CD4-positive, alpha-beta T cell (primary cell): ENCODE measurements at regions of chr1 and their contacts with region 1.

Region 1: DNA sequence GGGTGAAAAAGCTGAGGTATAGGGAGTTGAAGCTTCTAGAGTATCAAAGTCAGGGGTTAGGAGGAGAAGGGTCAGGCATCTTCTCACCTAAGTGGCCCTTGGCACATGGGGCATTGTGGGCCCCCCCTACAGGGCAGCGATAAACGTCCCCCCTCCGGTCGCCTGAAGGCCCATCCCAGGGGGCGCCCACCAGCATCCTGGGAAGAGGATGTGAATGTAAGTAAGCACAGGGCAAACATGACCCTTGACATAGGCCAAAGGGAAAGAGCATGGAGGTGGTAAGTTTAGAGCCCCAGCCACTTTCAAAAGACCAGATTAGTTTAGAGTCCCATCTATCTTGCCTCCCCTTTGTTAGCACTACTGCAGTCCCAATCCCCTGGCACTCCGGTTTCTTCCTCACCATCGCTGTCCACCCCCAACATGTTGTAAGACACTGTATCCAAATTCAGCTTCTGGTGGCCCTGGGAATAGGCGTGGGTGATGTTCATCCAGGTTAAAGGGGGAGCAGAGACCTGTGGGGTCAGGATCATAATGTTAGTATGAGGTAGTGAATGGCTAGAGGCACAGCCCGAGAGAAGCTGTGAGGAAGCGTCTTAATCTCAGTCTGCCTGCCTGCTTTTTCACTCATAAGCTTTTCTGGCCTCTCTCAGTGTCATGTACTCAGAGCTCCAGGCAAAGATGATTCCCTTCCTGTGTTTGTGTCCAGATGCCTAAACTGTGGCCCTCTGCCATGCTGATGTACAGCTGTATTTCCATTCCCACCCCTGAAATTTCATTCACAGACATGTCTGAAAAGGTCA is 2.7 kb downstream of the ITGA10 start:
- DNase-seq: no peak
- ATAC-seq: no peak
- H3K4me3 ChIP-seq: no peak overlapping the region
- H3K4me3 Mint-ChIP-seq: no peak overlapping the region
- H3K27ac ChIP-seq: no peak overlapping the region
- H3K27ac Mint-ChIP-seq: no peak overlapping the region
- H3K4me1 ChIP-seq: peaks cover 3% of the 10 kb centered on the region
- H3K4me1 Mint-ChIP-seq: peaks cover 6% of the 10 kb centered on the region
- H3K27me3 ChIP-seq: no peaks in the 10 kb centered on the region
- H3K27me3 Mint-ChIP-seq: no peaks in the 10 kb centered on the region
- CTCF ChIP-seq: no peak

Region 2: GRCh38 chr1:145804235-145805045 is 102.7 kb before region 1 on chr1:
- CTCF ChIA-PET with region 1: no interaction called
- POLR2A ChIA-PET with region 1: no interaction called
- intact Hi-C with region 1: no loop called
- DNase-seq: no peak
- ATAC-seq: no peak
- H3K4me3 ChIP-seq: no peak overlapping the region
- H3K4me3 Mint-ChIP-seq: no peak overlapping the region
- H3K27ac ChIP-seq: no peak overlapping the region
- H3K27ac Mint-ChIP-seq: no peak overlapping the region
- H3K4me1 ChIP-seq: no peaks in the 10 kb centered on the region
- H3K4me1 Mint-ChIP-seq: peaks cover 64% of the 10 kb centered on the region
- H3K27me3 ChIP-seq: no peaks in the 10 kb centered on the region
- H3K27me3 Mint-ChIP-seq: no peaks in the 10 kb centered on the region
- CTCF ChIP-seq: no peak

Region 3: GRCh38 chr1:145891587-145892485 is 15.3 kb before region 1 on chr1:
- CTCF ChIA-PET with region 1: interaction called, 4 read pairs
- POLR2A ChIA-PET with region 1: no interaction called
- intact Hi-C with region 1: loop called in 1 of 2 experiments (anchors 1 kb)
- DNase-seq: peak; percentile 18 to 70 (median 40)
- ATAC-seq: peak; percentile 70
- H3K4me3 ChIP-seq: no peak overlapping the region
- H3K4me3 Mint-ChIP-seq: no peak overlapping the region
- H3K27ac ChIP-seq: no peak overlapping the region
- H3K27ac Mint-ChIP-seq: no peak overlapping the region
- H3K4me1 ChIP-seq: no peaks in the 10 kb centered on the region
- H3K4me1 Mint-ChIP-seq: no peaks in the 10 kb centered on the region
- H3K27me3 ChIP-seq: no peaks in the 10 kb centered on the region
- H3K27me3 Mint-ChIP-seq: no peaks in the 10 kb centered on the region
- CTCF ChIP-seq: peak; percentile 82

Region 4: GRCh38 chr1:145949219-145949618 is 42.1 kb after region 1 on chr1:
- CTCF ChIA-PET with region 1: no interaction called
- POLR2A ChIA-PET with region 1: no interaction called
- intact Hi-C with region 1: no loop called
- DNase-seq: no peak
- ATAC-seq: no peak
- H3K4me3 ChIP-seq: no peak overlapping the region
- H3K4me3 Mint-ChIP-seq: no peak overlapping the region
- H3K27ac ChIP-seq: no peak overlapping the region
- H3K27ac Mint-ChIP-seq: peak overlapping the region; percentile 34
- H3K4me1 ChIP-seq: peaks cover 21% of the 10 kb centered on the region
- H3K4me1 Mint-ChIP-seq: peaks cover 49% of the 10 kb centered on the region
- H3K27me3 ChIP-seq: no peaks in the 10 kb centered on the region
- H3K27me3 Mint-ChIP-seq: no peaks in the 10 kb centered on the region
- CTCF ChIP-seq: no peak